A549 (cell line): ENCODE measurements at regions of chr7 and their contacts with region 1.

Region 1: DNA sequence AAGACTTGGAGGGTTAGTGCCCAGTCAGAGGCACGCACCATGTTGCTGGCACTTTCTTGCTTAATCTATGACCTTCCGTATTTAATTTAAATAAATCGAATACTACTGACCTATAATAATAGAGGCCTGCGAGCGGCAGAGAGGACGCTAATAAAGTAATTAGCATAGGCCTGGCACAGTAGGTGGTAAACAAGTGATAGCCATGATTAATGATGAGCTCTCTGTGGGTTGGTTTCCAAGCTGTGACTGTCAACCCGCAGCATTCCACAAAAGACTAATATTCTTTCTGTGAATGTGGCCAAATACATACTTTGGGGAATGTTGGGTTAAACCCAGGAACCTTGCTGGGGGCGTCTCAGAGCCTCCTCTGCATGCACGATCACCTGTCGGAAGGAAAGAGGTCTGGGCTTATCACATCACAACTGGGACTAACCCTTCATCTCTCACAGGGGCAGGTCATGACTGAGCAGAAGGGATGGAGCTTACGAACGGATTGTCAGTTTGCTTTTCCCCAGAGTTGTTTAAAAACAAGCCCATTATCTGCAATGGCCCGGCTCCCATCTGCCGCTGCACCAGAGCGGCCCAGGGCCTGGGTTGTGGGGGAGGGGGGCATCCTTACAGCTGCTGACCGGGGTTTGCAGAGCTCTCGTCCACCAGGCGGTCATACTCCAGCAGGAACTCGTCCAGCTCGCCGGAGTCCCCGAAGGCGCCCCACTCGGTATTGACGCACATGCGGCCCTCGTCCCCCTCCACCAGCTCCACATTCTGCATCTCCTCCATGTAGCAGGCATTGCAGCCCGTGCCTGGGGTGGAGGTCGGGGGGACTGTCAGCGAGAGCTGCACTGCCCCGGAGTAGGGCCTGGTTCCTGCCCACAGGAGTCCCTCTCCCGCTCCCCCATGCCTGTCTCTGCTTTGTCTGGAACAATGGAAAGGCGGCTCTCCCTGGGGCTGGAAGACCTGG is 6.2 kb upstream of the MYL7 start:
- DNase-seq: no peak
- ATAC-seq: no peak
- H3K4me3 ChIP-seq: no peak overlapping the region
- H3K27ac ChIP-seq: no peak overlapping the region
- H3K4me1 ChIP-seq: no peaks in the 10 kb centered on the region
- CTCF ChIP-seq: no peak
- EP300 ChIP-seq: no peak
- POLR2A ChIP-seq: no peak
- RAD21 ChIP-seq: no peak

Region 2: DNA sequence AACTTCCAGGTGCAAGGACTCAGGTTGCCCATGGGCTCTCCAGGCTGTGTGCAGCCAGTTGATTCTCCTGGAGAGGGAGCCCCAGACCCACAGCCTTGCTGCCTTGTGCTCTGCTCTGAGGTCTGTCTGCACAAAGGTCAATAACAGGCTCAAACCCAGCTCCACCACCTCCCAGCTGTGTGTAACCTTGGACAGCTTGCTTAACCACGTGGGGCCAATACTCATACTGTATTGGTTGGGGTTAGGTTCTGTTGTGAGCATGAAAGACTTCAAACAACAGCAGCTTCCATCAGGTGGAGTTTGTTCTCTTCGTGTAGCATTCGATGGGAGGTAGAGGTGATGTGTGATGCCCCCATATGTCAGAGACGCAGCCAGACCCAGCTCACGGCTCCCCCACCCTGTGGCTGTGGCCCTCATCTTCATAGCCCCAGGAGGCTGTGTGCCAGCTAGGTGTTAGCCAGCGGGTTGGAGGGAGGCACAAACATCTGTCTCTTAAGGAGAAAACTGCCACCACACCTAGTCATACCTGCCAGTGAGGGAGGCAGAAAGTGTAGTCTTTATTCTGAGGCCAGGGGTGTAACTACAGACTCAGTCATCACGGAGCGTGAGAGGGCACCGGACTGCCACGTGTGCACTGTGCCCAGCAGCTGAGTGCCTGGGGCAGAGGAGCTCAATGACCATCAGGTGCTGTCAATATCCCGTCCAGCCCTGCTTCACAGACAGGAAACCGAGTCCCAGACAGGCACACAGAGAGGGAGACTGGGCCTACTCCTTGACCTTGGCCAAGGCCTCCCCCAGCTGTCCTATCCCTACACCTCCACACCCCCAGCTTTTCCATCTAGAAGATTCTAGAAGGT is 15.9 kb before region 1 on chr7:
- CTCF ChIA-PET with region 1: interaction called, 14 read pairs
- POLR2A ChIA-PET with region 1: no interaction called
- DNase-seq: peak in 1 of 2 experiments; percentile 40
- ATAC-seq: peak; percentile 80 to 90
- H3K4me3 ChIP-seq: no peak overlapping the region
- H3K27ac ChIP-seq: no peak overlapping the region
- H3K4me1 ChIP-seq: no peaks in the 10 kb centered on the region
- CTCF ChIP-seq: peak; percentile 39
- EP300 ChIP-seq: no peak
- POLR2A ChIP-seq: no peak
- RAD21 ChIP-seq: peak; percentile 46 to 67; a peak in 3 of 5 replicates